ENCODE measurements at regions of chr1 and their contacts with region 1.

Region 1: DNA sequence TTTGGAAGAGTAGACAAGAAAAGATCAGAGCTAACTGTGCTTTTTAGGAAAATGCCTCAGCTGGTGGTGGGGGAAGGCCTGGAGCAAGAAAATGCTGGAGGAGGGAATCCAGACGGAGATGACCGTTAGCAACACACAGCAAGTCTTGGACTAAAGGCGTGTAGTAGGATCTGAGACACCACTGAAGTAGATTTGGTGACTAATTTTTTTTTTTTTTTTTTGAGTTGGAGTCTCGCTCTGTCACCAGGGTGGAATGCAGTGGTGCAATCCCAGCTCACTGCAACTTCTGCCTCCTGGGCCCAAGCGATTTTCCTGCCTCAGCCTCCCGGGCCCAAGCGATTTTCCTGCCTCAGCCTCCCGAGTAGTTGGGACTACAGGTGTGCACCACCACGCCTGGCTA is 41.2 kb downstream of the LPAR3 start:
- DNase-seq: no peak
- ATAC-seq: no peak
- H3K4me3 ChIP-seq: no peak overlapping the region
- H3K27ac ChIP-seq: no peak overlapping the region
- H3K4me1 ChIP-seq: peaks cover 15% of the 10 kb centered on the region
- H3K27me3 ChIP-seq: no peaks in the 10 kb centered on the region
- CTCF ChIP-seq: no peak
- EP300 ChIP-seq: no peak
- POLR2A ChIP-seq: no peak
- RAD21 ChIP-seq: no peak

Region 2: DNA sequence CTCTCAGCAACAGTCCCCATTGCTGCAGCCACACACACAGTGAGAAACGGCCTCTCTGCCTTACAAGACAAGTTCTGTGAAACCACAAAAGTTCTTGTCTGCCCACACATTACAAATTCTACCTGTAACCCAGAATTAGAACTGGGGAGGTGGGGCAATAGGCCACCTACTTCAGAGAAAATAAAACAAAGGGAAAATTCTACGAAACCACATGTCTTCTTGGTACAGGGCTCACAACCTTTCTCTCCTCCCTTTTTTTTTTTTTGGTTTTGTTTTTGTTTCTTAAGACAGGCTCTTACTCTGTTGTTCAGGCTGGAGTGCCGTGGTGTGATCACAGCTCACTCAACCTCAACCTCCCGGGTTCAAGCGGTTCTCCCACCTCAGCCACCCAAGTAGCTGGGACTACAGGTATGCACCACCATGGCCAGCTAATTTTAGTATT is 11.0 kb after region 1 on chr1:
- CTCF ChIA-PET with region 1: interaction called, 5 read pairs
- POLR2A ChIA-PET with region 1: no interaction called
- RAD21 ChIA-PET with region 1: interaction called, 3 read pairs
- SMC1A ChIA-PET with region 1: interaction called, 11 read pairs
- in situ Hi-C with region 1: no loop called
- intact Hi-C with region 1: no loop called
- DNase-seq: peak; percentile 80
- ATAC-seq: peak; percentile 92
- H3K4me3 ChIP-seq: 0 out of 2 replicates have a peak overlapping the region, but pooled peaks have one; percentile 6
- H3K27ac ChIP-seq: no peak overlapping the region
- H3K4me1 ChIP-seq: peaks cover 30% of the 10 kb centered on the region
- H3K27me3 ChIP-seq: no peaks in the 10 kb centered on the region
- CTCF ChIP-seq: no peak
- EP300 ChIP-seq: peak in 1 of 2 experiments; percentile 65; a peak in 2 of 4 replicates
- POLR2A ChIP-seq: no peak
- RAD21 ChIP-seq: peak; percentile 15; the same call in 1 of the 2 replicates

Measured in GM12878 (cell line).